ENCODE measurements at regions of chr12 and their contacts with region 1.

Region 1: GRCh38 chr12:132908145-132909044 is 21.0 kb upstream of the CHFR start:
- DNase-seq: peak; percentile 99
- H3K4me3 ChIP-seq: peak overlapping the region; percentile 48 to 65 (median 58)
- H3K27ac ChIP-seq: peak overlapping the region; percentile 84 to 87 (median 87)
- H3K4me1 ChIP-seq: peaks cover 0 to 17% (median 13%) of the 10 kb centered on the region in 4 donors
- H3K27me3 ChIP-seq: no peaks in the 10 kb centered on the region
- CTCF ChIP-seq: no peak
- EP300 ChIP-seq: no peak
- POLR2A ChIP-seq: peak; percentile 23 to 25

Region 2: DNA sequence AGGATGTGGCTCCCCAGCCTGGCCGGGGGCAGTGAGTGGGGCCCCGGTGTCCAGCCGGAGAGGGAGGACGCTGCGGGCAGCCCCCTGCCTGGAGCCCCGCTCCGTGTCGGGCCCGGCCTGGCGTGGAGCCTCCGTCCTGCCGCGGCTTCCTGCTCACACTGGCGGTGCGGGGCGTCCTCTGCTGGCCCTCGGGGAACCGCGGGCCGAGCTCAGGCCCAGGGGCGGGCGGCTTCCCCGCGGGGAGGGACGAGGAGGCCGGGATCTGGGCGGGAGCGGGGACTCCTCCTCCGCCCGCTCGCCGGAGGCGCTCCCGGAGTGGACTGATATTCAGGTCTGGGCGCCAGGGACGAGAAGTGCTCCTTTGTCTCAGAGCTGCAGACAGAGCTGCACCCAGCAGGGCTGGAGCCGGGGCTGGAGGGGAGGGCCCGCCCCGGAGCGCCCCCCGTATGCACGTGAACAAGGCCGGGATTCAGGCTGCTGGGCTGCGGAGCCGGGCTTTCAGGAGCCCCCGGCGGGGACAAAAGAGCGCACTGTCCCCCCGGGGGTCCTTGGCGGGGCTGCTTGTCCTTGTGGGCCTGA is 1078.0 kb before region 1 on chr12:
- intact Hi-C with region 1: no loop called
- DNase-seq: peak; percentile 92
- H3K4me3 ChIP-seq: peak overlapping the region; percentile 17 to 60 (median 46)
- H3K27ac ChIP-seq: peak overlapping the region; percentile 63 to 80 (median 74)
- H3K4me1 ChIP-seq: peaks cover 0 to 50% (median 44%) of the 10 kb centered on the region in 4 donors
- H3K27me3 ChIP-seq: peaks cover 21 to 76% (median 67%) of the 10 kb centered on the region in 3 donors
- CTCF ChIP-seq: peak in 2 of 4 experiments; percentile 39 to 44
- EP300 ChIP-seq: no peak
- POLR2A ChIP-seq: no peak

Region 3: GRCh38 chr12:132687208-132688164 is 220.9 kb before region 1 on chr12 and contains the starts of genes POLE and PXMP2:
- intact Hi-C with region 1: loop called (anchors 10 kb)
- DNase-seq: peak; percentile 98
- H3K4me3 ChIP-seq: peak within 1 kb of the TSS; percentile 76 to 95 (median 92)
- H3K27ac ChIP-seq: peak within 1 kb of the TSS; percentile 67 to 75 (median 70)
- H3K4me1 ChIP-seq: peaks cover 0 to 26% (median 15%) of the 10 kb centered on the region in 4 donors
- H3K27me3 ChIP-seq: no peaks in the 10 kb centered on the region
- CTCF ChIP-seq: no peak
- EP300 ChIP-seq: no peak
- POLR2A ChIP-seq: no peak
- total RNA-seq, gene POLE: 12.5 to 37.4 (median 34.0) TPM
- total RNA-seq, gene PXMP2: 19.4 to 46.4 (median 42.8) TPM

Region 4: GRCh38 chr12:132761032-132761920 is 147.1 kb before region 1 on chr12 and contains the start of gene ANKLE2:
- intact Hi-C with region 1: loop called (anchors 5 kb)
- DNase-seq: peak; percentile 78
- H3K4me3 ChIP-seq: peak within 1 kb of the TSS; percentile 80 to 100 (median 94)
- H3K27ac ChIP-seq: peak within 1 kb of the TSS; percentile 90 to 99 (median 96)
- H3K4me1 ChIP-seq: peaks cover 0 to 30% (median 27%) of the 10 kb centered on the region in 4 donors
- H3K27me3 ChIP-seq: no peaks in the 10 kb centered on the region
- CTCF ChIP-seq: no peak
- EP300 ChIP-seq: no peak
- POLR2A ChIP-seq: no peak
- total RNA-seq, gene ANKLE2: 32.9 to 58.4 (median 38.3) TPM

Region 5: DNA sequence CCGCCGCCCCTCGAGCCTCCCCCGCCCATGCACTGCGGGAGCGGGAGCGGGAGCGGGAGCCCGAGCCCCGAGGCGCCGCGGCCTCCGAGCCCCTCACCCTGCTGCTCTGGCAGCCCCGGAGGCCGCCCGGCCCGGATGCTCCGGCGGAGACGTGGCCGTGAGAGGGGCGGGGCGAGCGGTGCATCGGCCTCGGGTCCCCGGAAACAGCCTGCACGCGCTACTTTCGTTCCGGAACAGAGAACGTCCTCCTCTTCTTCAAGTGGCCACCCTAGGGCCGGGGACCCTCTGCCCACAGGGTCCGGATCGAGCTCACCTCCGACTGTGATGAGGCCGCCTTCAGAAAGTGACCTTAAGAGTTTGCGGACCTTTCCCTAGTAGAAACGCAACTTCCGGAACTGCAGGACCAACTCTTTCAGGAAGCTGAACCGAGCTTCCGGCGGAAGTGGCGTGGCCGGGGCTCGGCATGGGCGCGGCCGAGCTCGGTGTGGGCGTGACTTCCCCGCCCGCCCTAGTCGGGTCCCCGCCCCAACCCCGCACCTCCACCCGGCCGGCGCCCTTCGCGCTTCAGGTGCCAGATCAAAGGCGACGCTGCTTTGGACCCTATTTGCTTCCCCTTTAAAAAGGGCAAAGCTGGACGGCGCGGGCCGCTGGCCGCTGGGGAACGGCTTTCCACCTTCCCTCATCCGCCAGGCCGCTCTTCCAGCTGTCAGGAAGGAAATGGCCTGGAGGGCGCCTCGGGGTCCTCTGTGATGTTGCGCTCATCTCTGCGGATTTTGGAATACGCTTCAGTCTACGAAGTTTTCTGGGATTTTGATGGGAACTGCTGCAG is 79.5 kb before region 1 on chr12 and contains the start of gene GOLGA3:
- intact Hi-C with region 1: loop called (anchors 2 kb)
- DNase-seq: peak; percentile 96
- H3K4me3 ChIP-seq: peak within 1 kb of the TSS; percentile 67 to 98 (median 86)
- H3K27ac ChIP-seq: peak within 1 kb of the TSS; percentile 89 to 98 (median 92)
- H3K4me1 ChIP-seq: peaks cover 0 to 34% (median 21%) of the 10 kb centered on the region in 4 donors
- H3K27me3 ChIP-seq: no peaks in the 10 kb centered on the region
- CTCF ChIP-seq: no peak
- EP300 ChIP-seq: peak in 1 of 4 donors; percentile 31
- POLR2A ChIP-seq: peak in 1 of 2 donors; percentile 19
- total RNA-seq, gene GOLGA3: 45.7 to 78.4 (median 56.2) TPM

Region 6: DNA sequence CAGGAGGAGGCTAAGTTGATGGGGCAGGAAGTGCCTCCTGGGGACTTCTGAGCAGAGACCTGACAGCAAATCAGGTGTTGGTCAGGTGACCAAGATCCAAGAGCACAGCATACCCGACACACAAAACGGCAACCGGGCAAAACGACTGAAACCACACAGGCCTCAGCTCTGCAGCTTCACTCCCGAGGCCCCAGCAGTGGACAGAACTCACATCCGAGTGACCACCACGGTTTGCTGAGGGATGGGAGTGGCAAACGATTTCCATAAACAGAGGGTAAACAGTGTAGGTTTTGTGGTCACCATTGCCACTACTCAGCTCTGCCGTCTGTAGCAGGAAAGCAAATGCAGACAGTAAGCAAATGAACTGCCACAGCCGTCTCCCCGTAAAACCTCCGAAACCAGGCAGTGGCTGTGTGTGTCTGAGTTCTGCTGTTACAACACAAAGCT is 35.4 kb before region 1 on chr12:
- intact Hi-C with region 1: no loop called
- DNase-seq: no peak
- H3K4me3 ChIP-seq: no peak overlapping the region
- H3K27ac ChIP-seq: no peak overlapping the region
- H3K4me1 ChIP-seq: no peaks in the 10 kb centered on the region
- H3K27me3 ChIP-seq: no peaks in the 10 kb centered on the region
- CTCF ChIP-seq: no peak
- EP300 ChIP-seq: no peak
- POLR2A ChIP-seq: no peak

Region 7: DNA sequence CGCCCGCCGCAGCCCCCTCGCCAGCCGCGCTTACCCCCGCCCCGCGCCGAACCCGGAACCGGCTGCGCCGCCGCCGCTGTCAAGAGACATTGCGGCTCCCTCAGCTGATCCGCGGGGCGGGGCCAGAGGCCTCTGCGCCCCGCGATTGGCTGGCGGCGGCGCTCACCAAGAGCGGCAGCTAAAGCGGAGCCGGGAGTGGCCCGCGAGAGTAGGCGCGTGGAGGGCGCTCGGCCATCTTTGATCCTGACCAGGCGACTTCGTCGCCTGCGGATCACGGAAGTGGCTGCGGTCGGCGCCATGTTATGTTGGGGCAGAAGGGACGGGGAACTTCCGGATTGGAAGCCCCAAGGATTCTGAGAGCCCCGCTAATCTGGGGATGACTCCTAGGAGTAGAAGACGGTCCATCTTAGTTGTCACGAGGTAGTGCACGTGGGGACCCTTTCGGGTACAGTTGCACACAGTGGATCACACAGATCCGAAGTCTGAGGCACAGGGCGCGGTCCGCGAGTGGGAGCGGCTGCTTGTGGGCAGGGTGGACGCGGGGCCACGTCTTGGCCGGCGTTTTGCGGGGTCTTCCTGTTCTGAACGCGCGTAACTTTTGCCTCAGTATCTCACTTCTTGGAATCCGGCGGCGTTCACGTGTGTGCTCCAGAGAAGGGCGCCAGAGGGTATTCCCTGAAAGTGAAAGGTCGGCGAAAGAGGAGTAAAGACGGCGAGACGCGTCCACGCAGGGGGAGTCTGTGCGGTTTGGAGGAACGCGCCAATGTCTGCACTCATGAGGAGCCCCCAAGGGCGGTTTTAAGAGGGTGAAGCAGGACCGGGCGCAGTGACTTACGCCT is 20.7 kb before region 1 on chr12 and contains the start of gene CHFR:
- intact Hi-C with region 1: loop called (anchors 1 kb)
- DNase-seq: peak; percentile 99
- H3K4me3 ChIP-seq: peak within 1 kb of the TSS; percentile 75 to 93 (median 92)
- H3K27ac ChIP-seq: peak within 1 kb of the TSS; percentile 92 to 93 (median 93)
- H3K4me1 ChIP-seq: peaks cover 0 to 19% (median 14%) of the 10 kb centered on the region in 4 donors
- H3K27me3 ChIP-seq: no peaks in the 10 kb centered on the region
- CTCF ChIP-seq: no peak
- EP300 ChIP-seq: peak in 2 of 4 donors; percentile 26 to 59
- POLR2A ChIP-seq: peak in 1 of 2 donors; percentile 26
- total RNA-seq, gene CHFR: 21.4 to 52.3 (median 30.2) TPM

Measured in sigmoid colon (tissue), 7 donors.